ENCODE measurements at regions of chr2 and their contacts with region 1.

Region 1: DNA sequence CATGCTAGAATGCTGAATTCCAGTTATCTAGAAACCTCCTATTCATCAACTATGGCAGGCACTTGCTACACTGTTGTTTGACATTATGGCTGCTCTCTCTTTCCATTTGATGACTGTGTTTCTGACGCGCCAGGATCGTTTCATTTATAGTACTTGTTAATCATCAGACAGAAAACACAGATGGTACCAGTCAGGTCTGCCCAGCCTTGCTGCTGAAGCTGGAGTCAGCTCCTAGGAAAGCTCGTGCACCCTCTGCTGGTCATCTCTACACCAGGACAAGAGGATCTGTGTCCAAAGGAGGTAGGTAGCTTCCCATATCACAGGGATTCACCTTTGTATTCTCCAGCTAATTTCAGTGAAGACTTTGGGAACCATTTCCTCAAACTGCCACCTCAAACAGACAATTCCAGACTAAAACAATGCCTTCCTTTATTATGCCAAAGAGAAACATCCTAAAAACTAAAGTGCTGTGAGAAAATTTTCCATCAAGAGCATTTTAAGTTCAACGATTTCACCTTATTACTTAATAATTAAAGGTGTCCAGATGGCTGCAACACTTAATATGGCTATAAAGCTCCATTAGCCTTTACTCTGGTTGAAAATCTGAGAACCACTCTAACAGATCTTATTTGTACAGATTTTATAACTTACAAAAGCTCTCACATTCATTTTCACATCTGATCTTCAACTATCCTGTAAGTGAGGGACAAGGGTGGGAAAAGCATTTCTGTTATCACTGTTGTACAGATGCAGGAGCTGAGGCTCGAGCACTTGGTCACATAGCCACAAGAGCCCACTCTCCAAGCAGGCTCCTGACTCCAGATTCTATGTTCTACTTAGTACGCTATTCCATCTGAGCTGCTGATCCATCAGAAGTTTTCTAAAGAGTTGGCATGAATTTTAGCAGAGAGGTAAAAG is 17.5 kb downstream of the METTL8 start:
- DNase-seq: peak; percentile 92 to 95 (median 94)
- ATAC-seq: peak; percentile 99
- H3K4me3 ChIP-seq: no peak overlapping the region
- H3K27ac ChIP-seq: peak overlapping the region in 2 of 4 donors; percentile 35 to 75
- H3K4me1 ChIP-seq: no peaks in the 10 kb centered on the region
- H3K27me3 ChIP-seq: no peaks in the 10 kb centered on the region
- CTCF ChIP-seq: peak; percentile 61 to 89 (median 88)
- POLR2A ChIP-seq: no peak

Region 2: DNA sequence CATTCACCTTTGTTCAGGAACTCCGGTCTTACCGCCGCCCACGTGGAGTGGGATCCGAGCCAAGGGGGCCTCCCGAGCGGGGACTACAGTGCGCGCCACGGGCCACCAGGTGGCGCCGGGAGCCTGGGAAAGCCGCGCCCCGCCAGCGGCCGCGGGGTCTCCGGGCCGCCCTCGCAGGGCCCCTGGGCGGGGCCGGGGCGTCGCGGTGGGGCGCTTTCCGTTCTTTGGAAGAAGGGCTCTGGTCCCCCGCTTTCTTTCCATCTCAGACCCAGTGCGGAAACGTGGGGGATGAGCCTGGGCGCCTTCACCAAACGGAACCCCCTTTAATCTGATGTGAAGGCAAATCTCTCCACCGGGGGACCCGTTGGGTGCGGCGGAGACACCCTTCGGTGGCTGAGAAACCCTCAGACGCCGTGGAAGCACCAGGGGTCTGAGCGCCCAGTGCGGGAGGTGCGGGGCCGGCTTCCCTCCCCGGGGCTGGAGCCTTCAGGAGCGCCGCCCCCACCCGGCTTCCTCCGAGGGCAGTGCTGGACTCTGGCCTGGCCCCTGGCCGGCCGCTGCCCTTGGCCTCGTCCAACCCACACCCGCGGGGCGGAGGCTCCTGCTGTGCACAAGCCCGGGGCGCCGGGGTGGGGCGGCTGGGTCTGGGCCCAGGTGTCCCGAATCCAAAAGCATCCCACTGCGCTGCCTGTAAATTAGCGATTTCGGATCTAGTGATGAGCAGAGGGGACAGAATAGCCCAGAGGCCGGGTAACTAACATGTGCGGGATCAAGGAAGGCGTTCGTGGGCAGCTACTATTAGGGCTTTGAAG is 442.6 kb before region 1 on chr2:
- intact Hi-C with region 1: loop called (anchors 10 kb)
- DNase-seq: peak; percentile 89 to 93 (median 92)
- ATAC-seq: peak; percentile 95
- H3K4me3 ChIP-seq: peak overlapping the region; percentile 56
- H3K27ac ChIP-seq: peak overlapping the region in 3 of 4 donors; percentile 66 to 82 (median 74)
- H3K4me1 ChIP-seq: peaks cover 18% of the 10 kb centered on the region
- H3K27me3 ChIP-seq: no peaks in the 10 kb centered on the region
- CTCF ChIP-seq: peak; percentile 75 to 99 (median 95)
- POLR2A ChIP-seq: peak in 2 of 3 donors; percentile 56 to 57

Region 3: DNA sequence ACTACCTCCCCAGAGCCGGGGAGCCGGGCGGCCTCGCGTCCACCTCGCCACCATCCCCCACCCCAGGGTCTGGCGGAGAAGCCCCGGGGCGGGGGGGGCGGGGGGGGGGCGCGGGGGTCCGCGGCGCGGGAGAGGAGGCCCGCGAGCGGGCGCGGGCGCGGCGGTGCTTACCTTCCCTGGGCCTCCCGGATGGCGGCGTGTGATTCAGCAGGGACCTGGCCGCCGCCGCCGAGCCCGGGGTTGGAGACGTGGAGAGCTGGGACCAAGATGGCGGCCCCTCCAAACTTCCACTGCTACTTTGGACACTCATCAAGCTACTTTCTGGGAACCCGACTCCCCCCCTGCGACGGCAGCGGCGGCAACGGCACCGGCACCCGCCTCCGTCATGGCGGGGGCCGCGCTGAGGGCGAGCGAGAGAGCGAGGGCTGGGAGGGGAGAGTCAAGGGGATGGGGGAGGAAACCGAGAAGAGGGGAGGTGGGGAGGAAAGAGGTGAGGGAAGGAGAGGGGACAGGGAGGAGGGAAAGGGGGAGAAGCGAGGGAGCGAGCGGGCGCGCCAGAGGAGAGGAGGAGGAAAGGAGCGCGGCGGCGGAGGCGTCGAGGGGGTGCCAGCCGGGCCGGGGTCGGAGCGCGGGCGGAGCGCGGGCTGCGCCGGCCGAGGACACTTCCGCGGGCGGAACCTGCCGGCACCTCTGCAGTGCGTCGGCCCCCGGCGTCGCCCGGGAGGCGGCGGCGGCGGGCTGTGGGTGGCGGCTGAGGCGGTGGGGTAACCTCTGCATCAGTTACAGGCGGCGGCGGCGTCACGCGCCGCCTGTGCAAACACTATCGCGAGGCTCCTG is 255.9 kb before region 1 on chr2 and contains the start of gene TLK1:
- intact Hi-C with region 1: loop called (anchors 10 kb)
- DNase-seq: peak; percentile 70 to 84 (median 74)
- ATAC-seq: peak; percentile 80
- H3K4me3 ChIP-seq: peak within 1 kb of the TSS; percentile 46 to 98
- H3K27ac ChIP-seq: peak within 1 kb of the TSS; percentile 86 to 99 (median 96)
- H3K4me1 ChIP-seq: peaks cover 28% of the 10 kb centered on the region
- H3K27me3 ChIP-seq: no peaks in the 10 kb centered on the region
- CTCF ChIP-seq: no peak
- POLR2A ChIP-seq: peak; percentile 38 to 73 (median 56)
- total RNA-seq, gene TLK1: 31.9 to 48.1 TPM

Region 4: GRCh38 chr2:172246649-172247048 is 830.4 kb after region 1 on chr2:
- intact Hi-C with region 1: no loop called
- DNase-seq: no peak
- ATAC-seq: no peak
- H3K4me3 ChIP-seq: no peak overlapping the region
- H3K27ac ChIP-seq: no peak overlapping the region
- H3K4me1 ChIP-seq: no peaks in the 10 kb centered on the region
- H3K27me3 ChIP-seq: no peaks in the 10 kb centered on the region
- CTCF ChIP-seq: no peak
- POLR2A ChIP-seq: no peak

Measured in body of pancreas (tissue), 4 donors.